CD4-positive, alpha-beta memory T cell (primary cell): ENCODE measurements at regions of chr2 and their contacts with region 1.

Region 1: GRCh38 chr2:30208452-30208851 is 22.9 kb upstream of the LBH start:
- DNase-seq: peak in 3 of 5 donors; percentile 35 to 48 (median 43)
- H3K4me3 ChIP-seq: no peak overlapping the region
- H3K4me3 Mint-ChIP-seq: peak overlapping the region in 6 of 8 donors; percentile 8 to 77 (median 54)
- H3K27ac ChIP-seq: no peak overlapping the region
- H3K27ac Mint-ChIP-seq: peak overlapping the region in 6 of 7 donors; percentile 20 to 88 (median 58)
- H3K4me1 ChIP-seq: peaks cover 23% of the 10 kb centered on the region
- H3K4me1 Mint-ChIP-seq: peaks cover 13 to 20% (median 16%) of the 10 kb centered on the region in 4 donors
- H3K27me3 ChIP-seq: no peaks in the 10 kb centered on the region
- H3K27me3 Mint-ChIP-seq: no peaks in the 10 kb centered on the region

Region 2: GRCh38 chr2:29940706-29941105 is 267.7 kb before region 1 on chr2:
- CTCF ChIA-PET with region 1: no interaction called
- POLR2A ChIA-PET with region 1: no interaction called
- intact Hi-C with region 1: no loop called
- DNase-seq: no peak
- H3K4me3 ChIP-seq: no peak overlapping the region
- H3K4me3 Mint-ChIP-seq: no peak overlapping the region
- H3K27ac ChIP-seq: no peak overlapping the region
- H3K27ac Mint-ChIP-seq: no peak overlapping the region
- H3K4me1 ChIP-seq: no peaks in the 10 kb centered on the region
- H3K4me1 Mint-ChIP-seq: no peaks in the 10 kb centered on the region
- H3K27me3 ChIP-seq: no peaks in the 10 kb centered on the region
- H3K27me3 Mint-ChIP-seq: peaks cover 2 to 8% of the 10 kb centered on the region in 2 donors

Region 3: DNA sequence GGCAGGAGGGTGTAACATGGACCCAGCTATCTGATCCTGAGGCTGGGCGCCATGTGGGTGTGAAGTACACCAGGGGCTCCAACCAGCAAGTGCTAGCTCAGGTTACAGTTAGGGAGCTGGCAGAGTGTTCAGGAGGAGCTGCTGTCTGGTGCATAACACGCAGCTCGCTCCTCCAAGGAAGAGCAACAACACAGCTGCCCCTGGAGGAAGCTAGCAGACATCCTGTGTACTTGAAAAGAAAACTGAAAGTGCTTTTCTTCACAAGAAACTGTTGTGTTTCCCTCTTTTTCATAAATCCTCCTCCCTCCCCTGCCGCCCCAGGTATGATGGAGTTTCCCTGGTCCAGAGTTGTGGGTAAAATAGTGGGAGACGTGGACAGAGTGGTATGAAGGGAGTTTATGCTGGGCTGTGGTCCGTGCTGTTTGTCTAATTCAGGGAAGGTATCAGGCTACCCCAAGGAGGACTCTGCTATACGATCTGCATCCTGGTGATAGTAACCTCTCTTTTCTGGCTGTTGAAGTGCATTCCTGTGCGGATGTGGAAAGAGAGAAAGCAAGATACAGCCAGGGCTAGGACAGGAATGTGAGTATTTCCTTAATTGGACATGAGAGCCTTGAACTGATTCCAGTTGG is 16.8 kb after region 1 on chr2:
- CTCF ChIA-PET with region 1: interaction called, 296 read pairs
- POLR2A ChIA-PET with region 1: interaction called, 226 read pairs
- intact Hi-C with region 1: loop called (anchors 1 kb)
- DNase-seq: peak; percentile 63 to 75 (median 67)
- H3K4me3 ChIP-seq: peak overlapping the region; percentile 54 to 79
- H3K4me3 Mint-ChIP-seq: peak overlapping the region; percentile 88 to 99 (median 94)
- H3K27ac ChIP-seq: peak overlapping the region; percentile 95
- H3K27ac Mint-ChIP-seq: peak overlapping the region; percentile 96 to 100 (median 99)
- H3K4me1 ChIP-seq: peaks cover 75% of the 10 kb centered on the region
- H3K4me1 Mint-ChIP-seq: peaks cover 55 to 84% (median 70%) of the 10 kb centered on the region in 4 donors
- H3K27me3 ChIP-seq: no peaks in the 10 kb centered on the region
- H3K27me3 Mint-ChIP-seq: no peaks in the 10 kb centered on the region

Region 4: GRCh38 chr2:30239308-30239985 is 31.0 kb after region 1 on chr2:
- CTCF ChIA-PET with region 1: interaction called, 296 read pairs
- POLR2A ChIA-PET with region 1: interaction called, 226 read pairs
- intact Hi-C with region 1: no loop called
- DNase-seq: peak; percentile 76 to 80 (median 77)
- H3K4me3 ChIP-seq: peak overlapping the region in 1 of 2 donors; percentile 22
- H3K4me3 Mint-ChIP-seq: peak overlapping the region; percentile 76 to 99 (median 87)
- H3K27ac ChIP-seq: peak overlapping the region; percentile 6
- H3K27ac Mint-ChIP-seq: peak overlapping the region; percentile 71 to 90 (median 83)
- H3K4me1 ChIP-seq: peaks cover 90% of the 10 kb centered on the region
- H3K4me1 Mint-ChIP-seq: peaks cover 72 to 94% (median 82%) of the 10 kb centered on the region in 4 donors
- H3K27me3 ChIP-seq: no peaks in the 10 kb centered on the region
- H3K27me3 Mint-ChIP-seq: no peaks in the 10 kb centered on the region

Region 5: DNA sequence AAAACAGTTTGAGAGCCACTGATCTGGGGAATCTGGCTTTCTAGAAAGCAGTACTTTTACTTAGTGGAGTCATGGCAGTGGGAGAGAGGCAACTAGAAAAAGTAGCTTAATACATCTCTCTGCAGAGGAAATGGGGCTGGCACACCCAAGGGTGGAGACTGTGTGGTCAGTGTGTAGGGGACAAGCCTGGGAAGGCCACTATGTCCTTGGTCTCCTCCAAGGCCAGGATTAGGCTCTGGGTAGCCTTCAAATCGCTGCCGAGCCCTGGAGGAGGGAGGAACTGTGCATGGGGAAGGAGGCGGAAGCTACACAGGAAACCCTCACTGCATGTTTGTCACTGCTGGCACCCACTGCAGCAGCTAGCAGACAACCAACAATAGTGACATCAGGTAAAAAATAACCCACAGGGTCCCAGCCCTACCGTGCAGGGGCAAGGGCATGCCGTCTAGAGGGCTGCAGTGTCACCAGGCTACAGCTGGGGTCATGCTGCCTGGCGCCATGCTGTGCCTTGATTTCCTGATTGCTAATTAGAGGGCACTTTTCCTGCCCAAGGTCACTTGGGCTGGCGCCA is 57.7 kb after region 1 on chr2:
- CTCF ChIA-PET with region 1: interaction called, 18 read pairs
- POLR2A ChIA-PET with region 1: interaction called, 11 read pairs
- intact Hi-C with region 1: loop called (anchors 2 kb)
- DNase-seq: peak; percentile 68 to 89 (median 75)
- H3K4me3 ChIP-seq: peak overlapping the region; percentile 34 to 44
- H3K4me3 Mint-ChIP-seq: peak overlapping the region; percentile 86 to 96 (median 90)
- H3K27ac ChIP-seq: peak overlapping the region; percentile 66
- H3K27ac Mint-ChIP-seq: peak overlapping the region; percentile 92 to 99 (median 98)
- H3K4me1 ChIP-seq: peaks cover 70% of the 10 kb centered on the region
- H3K4me1 Mint-ChIP-seq: peaks cover 46 to 84% (median 72%) of the 10 kb centered on the region in 4 donors
- H3K27me3 ChIP-seq: no peaks in the 10 kb centered on the region
- H3K27me3 Mint-ChIP-seq: no peaks in the 10 kb centered on the region

Region 6: GRCh38 chr2:30421604-30422443 is 213.4 kb after region 1 on chr2:
- CTCF ChIA-PET with region 1: interaction called, 13 read pairs
- POLR2A ChIA-PET with region 1: no interaction called
- intact Hi-C with region 1: no loop called
- DNase-seq: peak in 4 of 5 donors; percentile 16 to 58 (median 26)
- H3K4me3 ChIP-seq: no peak overlapping the region
- H3K4me3 Mint-ChIP-seq: peak overlapping the region; percentile 23 to 74 (median 61)
- H3K27ac ChIP-seq: peak overlapping the region; percentile 40
- H3K27ac Mint-ChIP-seq: peak overlapping the region; percentile 68 to 93 (median 84)
- H3K4me1 ChIP-seq: peaks cover 33% of the 10 kb centered on the region
- H3K4me1 Mint-ChIP-seq: peaks cover 26 to 47% (median 31%) of the 10 kb centered on the region in 4 donors
- H3K27me3 ChIP-seq: no peaks in the 10 kb centered on the region
- H3K27me3 Mint-ChIP-seq: no peaks in the 10 kb centered on the region

Region 7: GRCh38 chr2:30472326-30472725 is 263.9 kb after region 1 on chr2:
- CTCF ChIA-PET with region 1: interaction called, 46 read pairs
- POLR2A ChIA-PET with region 1: interaction called, 4 read pairs
- intact Hi-C with region 1: loop called (anchors 1 kb)
- DNase-seq: no peak
- H3K4me3 ChIP-seq: no peak overlapping the region
- H3K4me3 Mint-ChIP-seq: no peak overlapping the region
- H3K27ac ChIP-seq: no peak overlapping the region
- H3K27ac Mint-ChIP-seq: peak overlapping the region in 1 of 7 donors; percentile 51
- H3K4me1 ChIP-seq: no peaks in the 10 kb centered on the region
- H3K4me1 Mint-ChIP-seq: peaks cover 12 to 17% (median 15%) of the 10 kb centered on the region in 4 donors
- H3K27me3 ChIP-seq: no peaks in the 10 kb centered on the region
- H3K27me3 Mint-ChIP-seq: no peaks in the 10 kb centered on the region

Region 8: DNA sequence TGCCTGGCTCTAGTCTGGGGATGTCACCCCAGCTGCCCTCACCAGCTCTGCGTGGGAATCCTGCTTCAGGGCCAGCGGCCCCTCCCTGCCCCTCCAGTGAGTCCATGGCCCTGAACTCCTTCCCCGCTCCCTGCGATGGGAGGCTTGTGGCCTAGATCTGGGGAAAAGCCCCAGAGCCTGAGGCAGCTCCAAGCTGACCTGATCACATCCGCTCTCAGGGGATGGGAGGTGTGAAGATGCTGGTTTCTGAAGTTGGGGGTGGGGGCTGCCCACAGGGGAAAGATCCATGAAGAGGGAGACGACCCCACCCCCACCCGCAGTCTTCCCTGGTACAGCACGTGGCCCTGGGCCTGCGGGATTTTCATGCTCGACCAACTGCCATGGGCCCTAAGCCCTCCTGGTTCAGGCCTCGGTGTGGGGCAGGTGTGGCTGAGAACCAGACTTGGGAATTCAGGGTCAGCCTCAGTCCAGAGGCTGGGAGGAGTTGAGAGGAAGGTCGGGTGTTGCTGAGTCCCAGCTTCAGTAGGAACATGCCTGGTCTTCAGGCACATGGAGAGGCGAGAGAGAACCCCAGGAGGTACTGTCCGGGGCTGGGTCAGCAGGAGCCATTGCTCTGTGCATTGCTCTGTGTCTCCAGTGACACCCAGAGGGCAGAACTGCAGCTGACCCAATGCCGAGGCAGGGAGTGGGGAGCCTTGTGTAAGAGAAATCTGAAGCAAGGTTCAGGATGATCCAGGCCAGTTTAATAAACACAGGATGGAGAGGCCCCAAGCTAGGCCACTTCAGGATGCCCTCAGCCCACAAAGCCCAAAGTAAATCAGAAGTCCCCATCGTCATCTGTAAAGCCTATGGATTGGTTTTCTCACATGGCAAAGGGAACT is 483.7 kb after region 1 on chr2:
- CTCF ChIA-PET with region 1: interaction called, 11 read pairs
- POLR2A ChIA-PET with region 1: no interaction called
- intact Hi-C with region 1: no loop called
- DNase-seq: no peak
- H3K4me3 ChIP-seq: no peak overlapping the region
- H3K4me3 Mint-ChIP-seq: no peak overlapping the region
- H3K27ac ChIP-seq: no peak overlapping the region
- H3K27ac Mint-ChIP-seq: no peak overlapping the region
- H3K4me1 ChIP-seq: no peaks in the 10 kb centered on the region
- H3K4me1 Mint-ChIP-seq: no peaks in the 10 kb centered on the region
- H3K27me3 ChIP-seq: no peaks in the 10 kb centered on the region
- H3K27me3 Mint-ChIP-seq: peaks cover 3 to 7% of the 10 kb centered on the region in 2 donors